GM13977 (cell line): ENCODE measurements at regions of chr11 and their contacts with region 1.

Region 1: GRCh38 chr11:22169833-22170232 is 23.1 kb upstream of the ANO5 start:
- DNase-seq: no peak
- CTCF ChIP-seq: peak; percentile 49

Region 2: GRCh38 chr11:21545699-21546098 is 624.1 kb before region 1 on chr11:
- in situ Hi-C with region 1: no loop called
- DNase-seq: no peak
- CTCF ChIP-seq: no peak

Region 3: DNA sequence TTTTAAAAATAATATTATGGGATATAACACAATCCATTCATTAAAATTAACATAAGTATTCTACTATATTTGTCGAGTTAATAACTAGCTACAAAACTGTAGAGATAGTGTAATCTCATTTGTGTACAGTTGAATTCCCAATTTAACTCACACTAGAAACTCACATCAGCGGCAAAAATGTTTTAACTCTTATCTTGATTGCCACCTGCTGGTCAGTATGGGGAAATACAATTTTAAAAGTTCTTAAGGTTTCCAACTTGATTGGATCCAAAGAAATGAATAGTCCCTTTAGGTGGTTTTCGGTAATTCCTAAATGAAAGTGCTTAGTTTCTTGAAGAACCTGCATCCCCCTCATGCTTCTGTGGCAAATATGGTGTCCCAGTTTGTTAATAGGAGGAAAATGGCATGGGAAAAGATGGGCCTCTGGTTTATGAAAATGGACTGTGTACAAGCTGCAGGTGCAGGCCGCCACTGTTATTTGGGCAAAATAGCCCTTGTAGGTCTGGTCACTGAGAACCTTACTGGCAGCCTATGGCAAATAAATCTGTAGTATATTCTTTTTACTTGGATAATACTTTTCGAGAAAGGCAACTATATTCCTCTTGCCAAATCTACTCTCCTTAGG is 134.6 kb after region 1 on chr11:
- in situ Hi-C with region 1: loop called (anchors 10 kb)
- DNase-seq: peak; percentile 25
- CTCF ChIP-seq: peak; percentile 66